ENCODE measurements at regions of chr2 and their contacts with region 1.

Region 1: GRCh38 chr2:96739633-96740428 is at the start of gene LMAN2L:
- DNase-seq: peak; percentile 92 to 99 (median 96)
- ATAC-seq: peak; percentile 98
- H3K4me3 ChIP-seq: peak within 1 kb of the TSS; percentile 60 to 98
- H3K4me3 Mint-ChIP-seq: peak within 1 kb of the TSS; percentile 97
- H3K27ac ChIP-seq: peak within 1 kb of the TSS; percentile 46 to 73
- H3K27ac Mint-ChIP-seq: peak within 1 kb of the TSS; percentile 91
- H3K4me1 ChIP-seq: peaks cover 13% of the 10 kb centered on the region
- H3K4me1 Mint-ChIP-seq: peaks cover 38% of the 10 kb centered on the region
- H3K27me3 ChIP-seq: no peaks in the 10 kb centered on the region
- H3K27me3 Mint-ChIP-seq: no peaks in the 10 kb centered on the region
- CTCF ChIP-seq: no peak
- total RNA-seq, gene LMAN2L: 1.1 to 1.7 TPM

Region 2: GRCh38 chr2:96225016-96225533 is 514.8 kb before region 1 on chr2:
- CTCF ChIA-PET with region 1: no interaction called
- POLR2A ChIA-PET with region 1: no interaction called
- intact Hi-C with region 1: no loop called
- DNase-seq: peak in 1 of 9 experiments; percentile 32
- ATAC-seq: no peak
- H3K4me3 ChIP-seq: no peak overlapping the region
- H3K4me3 Mint-ChIP-seq: no peak overlapping the region
- H3K27ac ChIP-seq: no peak overlapping the region
- H3K27ac Mint-ChIP-seq: no peak overlapping the region
- H3K4me1 ChIP-seq: no peaks in the 10 kb centered on the region
- H3K4me1 Mint-ChIP-seq: no peaks in the 10 kb centered on the region
- H3K27me3 ChIP-seq: no peaks in the 10 kb centered on the region
- H3K27me3 Mint-ChIP-seq: no peaks in the 10 kb centered on the region
- CTCF ChIP-seq: no peak

Region 3: GRCh38 chr2:96638144-96639121 is 101.4 kb before region 1 on chr2 and contains the start of gene KANSL3:
- CTCF ChIA-PET with region 1: no interaction called
- POLR2A ChIA-PET with region 1: interaction called, 3 read pairs
- intact Hi-C with region 1: loop called (anchors 1 kb)
- DNase-seq: peak; percentile 79 to 95 (median 88)
- ATAC-seq: peak; percentile 85
- H3K4me3 ChIP-seq: peak within 1 kb of the TSS; percentile 71 to 95
- H3K4me3 Mint-ChIP-seq: peak within 1 kb of the TSS; percentile 93
- H3K27ac ChIP-seq: peak within 1 kb of the TSS; percentile 83 to 91
- H3K27ac Mint-ChIP-seq: peak within 1 kb of the TSS; percentile 96
- H3K4me1 ChIP-seq: peaks cover 24% of the 10 kb centered on the region
- H3K4me1 Mint-ChIP-seq: peaks cover 32% of the 10 kb centered on the region
- H3K27me3 ChIP-seq: no peaks in the 10 kb centered on the region
- H3K27me3 Mint-ChIP-seq: peaks cover 2% of the 10 kb centered on the region
- CTCF ChIP-seq: no peak
- total RNA-seq, gene KANSL3: 58.8 to 60.4 TPM

Region 4: GRCh38 chr2:96727431-96727830 is 12.4 kb before region 1 on chr2:
- CTCF ChIA-PET with region 1: no interaction called
- POLR2A ChIA-PET with region 1: no interaction called
- intact Hi-C with region 1: no loop called
- DNase-seq: no peak
- ATAC-seq: no peak
- H3K4me3 ChIP-seq: no peak overlapping the region
- H3K4me3 Mint-ChIP-seq: no peak overlapping the region
- H3K27ac ChIP-seq: no peak overlapping the region
- H3K27ac Mint-ChIP-seq: no peak overlapping the region
- H3K4me1 ChIP-seq: no peaks in the 10 kb centered on the region
- H3K4me1 Mint-ChIP-seq: no peaks in the 10 kb centered on the region
- H3K27me3 ChIP-seq: no peaks in the 10 kb centered on the region
- H3K27me3 Mint-ChIP-seq: no peaks in the 10 kb centered on the region
- CTCF ChIP-seq: no peak

Region 5: DNA sequence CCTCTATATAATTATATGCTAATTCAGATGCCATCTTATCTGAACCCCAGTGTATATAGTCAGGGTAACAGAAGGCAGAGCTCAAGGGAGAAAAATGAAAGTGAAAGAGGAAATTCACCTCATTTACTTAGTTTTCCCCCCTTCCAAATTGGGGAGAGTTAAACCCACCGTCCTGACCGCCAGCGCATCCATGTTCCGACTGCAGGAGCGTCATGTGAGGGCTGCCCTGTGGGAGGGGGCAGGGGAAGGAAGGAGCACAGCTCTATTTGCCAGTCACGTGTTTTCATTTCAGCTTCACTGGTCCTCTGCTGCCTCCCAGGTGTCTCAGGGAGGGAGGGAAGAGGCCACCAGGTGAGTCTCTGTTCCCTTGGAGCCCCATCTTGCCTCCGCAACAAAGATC is 34.1 kb after region 1 on chr2:
- CTCF ChIA-PET with region 1: no interaction called
- POLR2A ChIA-PET with region 1: no interaction called
- intact Hi-C with region 1: loop called in 1 of 2 experiments (anchors 1 kb)
- DNase-seq: peak in 8 of 9 experiments; percentile 28 to 84 (median 56)
- ATAC-seq: peak; percentile 81
- H3K4me3 ChIP-seq: peak overlapping the region; percentile 60 to 67
- H3K4me3 Mint-ChIP-seq: peak overlapping the region; percentile 94
- H3K27ac ChIP-seq: peak overlapping the region; percentile 32 to 78
- H3K27ac Mint-ChIP-seq: peak overlapping the region; percentile 94
- H3K4me1 ChIP-seq: peaks cover 19% of the 10 kb centered on the region
- H3K4me1 Mint-ChIP-seq: peaks cover 26% of the 10 kb centered on the region
- H3K27me3 ChIP-seq: no peaks in the 10 kb centered on the region
- H3K27me3 Mint-ChIP-seq: no peaks in the 10 kb centered on the region
- CTCF ChIP-seq: no peak

Region 6: GRCh38 chr2:96788442-96789244 is 48.8 kb after region 1 on chr2:
- CTCF ChIA-PET with region 1: no interaction called
- POLR2A ChIA-PET with region 1: no interaction called
- intact Hi-C with region 1: no loop called
- DNase-seq: no peak
- ATAC-seq: no peak
- H3K4me3 ChIP-seq: no peak overlapping the region
- H3K4me3 Mint-ChIP-seq: no peak overlapping the region
- H3K27ac ChIP-seq: no peak overlapping the region
- H3K27ac Mint-ChIP-seq: no peak overlapping the region
- H3K4me1 ChIP-seq: no peaks in the 10 kb centered on the region
- H3K4me1 Mint-ChIP-seq: no peaks in the 10 kb centered on the region
- H3K27me3 ChIP-seq: no peaks in the 10 kb centered on the region
- H3K27me3 Mint-ChIP-seq: no peaks in the 10 kb centered on the region
- CTCF ChIP-seq: no peak

Region 7: GRCh38 chr2:96801005-96801785 is 61.4 kb after region 1 on chr2:
- CTCF ChIA-PET with region 1: no interaction called
- POLR2A ChIA-PET with region 1: interaction called, 4 read pairs
- intact Hi-C with region 1: loop called (anchors 1 to 5 kb)
- DNase-seq: peak; percentile 44 to 83 (median 72)
- ATAC-seq: peak; percentile 100
- H3K4me3 ChIP-seq: no peak overlapping the region
- H3K4me3 Mint-ChIP-seq: no peak overlapping the region
- H3K27ac ChIP-seq: no peak overlapping the region
- H3K27ac Mint-ChIP-seq: no peak overlapping the region
- H3K4me1 ChIP-seq: peaks cover 6% of the 10 kb centered on the region
- H3K4me1 Mint-ChIP-seq: peaks cover 5% of the 10 kb centered on the region
- H3K27me3 ChIP-seq: no peaks in the 10 kb centered on the region
- H3K27me3 Mint-ChIP-seq: no peaks in the 10 kb centered on the region
- CTCF ChIP-seq: peak; percentile 64

Measured in CD8-positive, alpha-beta T cell (primary cell).